Thyroid gland (tissue), 4 donors: ENCODE measurements at regions of chr15 and their contacts with region 1.

Region 1: DNA sequence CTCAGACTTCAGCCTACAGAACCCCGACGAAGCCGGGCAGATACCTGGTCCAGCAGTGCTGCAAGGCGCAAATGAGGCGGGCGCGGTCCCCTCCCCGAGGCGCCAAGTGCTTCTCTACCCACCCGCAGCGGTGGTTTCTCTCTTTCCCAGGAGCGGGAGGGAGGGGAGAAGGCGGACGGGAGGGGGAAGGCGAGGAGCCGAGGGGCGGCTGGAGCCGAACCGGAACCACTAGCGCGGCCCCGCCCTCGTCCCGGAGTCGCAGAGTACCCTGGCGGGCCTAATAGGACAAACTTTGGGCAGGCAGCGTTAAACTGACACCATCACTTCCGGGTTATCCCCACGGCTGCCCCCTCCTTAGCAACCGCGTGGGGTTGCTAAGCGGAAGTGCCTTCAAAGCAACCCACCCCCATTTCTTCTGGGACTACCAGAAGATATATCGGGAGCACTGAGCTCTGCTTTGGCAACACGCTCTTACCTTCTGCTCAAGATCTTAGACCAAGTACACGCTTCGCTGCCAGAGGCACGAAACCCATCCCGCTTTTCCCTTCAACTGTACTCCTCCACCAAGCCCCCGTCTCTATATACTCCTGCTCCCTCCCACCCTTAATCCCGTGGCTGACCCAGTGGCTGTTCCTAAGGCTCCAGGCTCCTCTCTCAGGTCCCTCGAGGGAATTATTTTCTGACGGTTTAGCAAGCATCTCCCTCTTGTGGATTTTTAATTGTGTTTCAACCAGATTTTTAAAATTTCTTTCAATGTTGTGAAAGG is at the start of gene CSNK1G1:
- DNase-seq: peak; percentile 96 to 98
- H3K4me3 ChIP-seq: peak within 1 kb of the TSS; percentile 66 to 97 (median 71)
- H3K27ac ChIP-seq: peak within 1 kb of the TSS; percentile 55 to 65 (median 60)
- H3K4me1 ChIP-seq: peaks cover 0 to 11% of the 10 kb centered on the region in 2 donors
- H3K27me3 ChIP-seq: no peaks in the 10 kb centered on the region
- CTCF ChIP-seq: peak; percentile 23 to 68 (median 41)
- POLR2A ChIP-seq: peak in 1 of 2 donors; percentile 41
- total RNA-seq, gene CSNK1G1: 19.1 to 50.0 (median 21.3) TPM

Region 2: GRCh38 chr15:64162870-64163658 is 193.1 kb before region 1 on chr15 and contains the start of gene PPIB:
- intact Hi-C with region 1: loop called (anchors 5 kb)
- DNase-seq: peak; percentile 99
- H3K4me3 ChIP-seq: peak within 1 kb of the TSS; percentile 63 to 77 (median 69)
- H3K27ac ChIP-seq: peak within 1 kb of the TSS; percentile 51 to 73 (median 68)
- H3K4me1 ChIP-seq: peaks cover 29 to 49% of the 10 kb centered on the region in 2 donors
- H3K27me3 ChIP-seq: no peaks in the 10 kb centered on the region
- CTCF ChIP-seq: peak in 4 of 6 experiments; percentile 35 to 74 (median 48)
- POLR2A ChIP-seq: peak; percentile 81 to 87
- total RNA-seq, gene PPIB: 1,046 to 3,819 (median 1,394) TPM

Region 3: DNA sequence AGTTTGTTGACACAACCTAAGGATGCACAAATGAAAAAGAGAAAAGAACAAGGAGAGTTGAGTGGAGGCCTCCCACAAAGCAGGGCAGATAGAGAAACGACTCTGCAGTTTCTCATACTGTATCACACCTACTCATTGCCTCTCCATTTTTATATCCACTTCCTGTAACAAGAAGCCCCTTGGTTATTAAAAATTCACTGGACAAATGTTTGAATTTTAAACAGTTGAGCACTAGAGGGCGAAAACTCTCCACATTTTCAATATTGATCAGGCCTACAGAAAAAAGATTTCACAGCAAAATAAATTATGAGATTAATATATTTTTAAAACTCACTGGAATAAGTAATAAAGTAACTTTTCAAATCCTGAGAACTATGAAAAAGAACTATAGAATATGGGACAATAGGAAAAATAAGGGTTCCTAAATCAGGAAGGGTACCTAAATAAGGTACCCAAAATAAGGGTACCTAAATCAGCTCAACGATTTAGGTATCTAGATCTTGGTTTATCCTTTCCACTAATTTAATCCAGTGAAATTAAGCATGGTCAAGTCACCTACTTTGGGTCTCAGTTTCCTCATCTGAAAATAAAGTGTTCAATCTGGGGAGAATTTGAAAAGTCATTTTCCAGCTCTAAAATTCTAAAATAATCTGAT is 146.3 kb before region 1 on chr15:
- intact Hi-C with region 1: loop called (anchors 5 kb)
- DNase-seq: no peak
- H3K4me3 ChIP-seq: no peak overlapping the region
- H3K27ac ChIP-seq: no peak overlapping the region
- H3K4me1 ChIP-seq: no peaks in the 10 kb centered on the region
- H3K27me3 ChIP-seq: no peaks in the 10 kb centered on the region
- CTCF ChIP-seq: peak in 5 of 6 experiments; percentile 12 to 60 (median 46)
- POLR2A ChIP-seq: no peak

Region 4: DNA sequence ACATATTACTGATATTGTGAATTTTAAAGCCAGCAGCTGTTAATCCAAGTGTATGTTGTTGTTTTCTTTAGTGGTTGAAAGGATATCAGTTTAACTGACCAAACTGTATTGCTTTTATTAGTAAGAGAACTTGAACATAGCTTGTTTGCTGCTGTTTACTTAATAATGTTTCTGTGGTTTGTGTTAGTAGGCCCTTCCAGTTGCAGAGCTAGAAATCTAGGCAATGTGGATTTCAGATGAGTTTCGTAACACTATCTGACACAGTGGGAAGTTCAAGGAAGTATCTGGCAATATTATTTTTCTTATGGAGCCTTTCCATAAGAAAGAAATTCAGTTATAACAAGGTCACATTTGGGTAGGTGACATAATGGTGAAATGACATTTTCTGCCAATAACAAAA is 122.7 kb after region 1 on chr15:
- intact Hi-C with region 1: no loop called
- DNase-seq: no peak
- H3K4me3 ChIP-seq: no peak overlapping the region
- H3K27ac ChIP-seq: no peak overlapping the region
- H3K4me1 ChIP-seq: peaks cover 5 to 6% of the 10 kb centered on the region in 2 donors
- H3K27me3 ChIP-seq: no peaks in the 10 kb centered on the region
- CTCF ChIP-seq: no peak
- POLR2A ChIP-seq: no peak

Region 5: DNA sequence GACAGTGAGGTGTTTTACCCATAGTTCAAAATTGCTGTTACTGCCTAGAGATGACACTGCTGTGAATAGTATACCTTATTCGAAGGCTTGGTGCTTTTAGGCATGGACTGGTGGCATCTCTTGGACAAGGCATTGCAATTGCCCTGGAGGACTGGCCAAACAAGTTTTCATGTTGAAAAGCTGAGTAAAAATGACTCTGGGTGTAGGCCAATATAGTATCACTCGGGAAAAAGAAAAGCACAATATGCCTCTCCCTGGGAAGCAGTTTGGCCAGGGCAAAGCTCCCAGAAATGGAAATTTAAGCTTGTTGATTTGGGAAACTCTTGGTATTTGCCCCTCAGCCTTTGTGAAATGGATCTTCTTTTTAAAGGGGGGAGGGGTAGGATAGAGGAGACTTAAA is 159.1 kb after region 1 on chr15:
- intact Hi-C with region 1: no loop called
- DNase-seq: peak; percentile 58
- H3K4me3 ChIP-seq: no peak overlapping the region
- H3K27ac ChIP-seq: peak overlapping the region; percentile 35 to 61 (median 41)
- H3K4me1 ChIP-seq: peaks cover 27 to 28% of the 10 kb centered on the region in 2 donors
- H3K27me3 ChIP-seq: no peaks in the 10 kb centered on the region
- CTCF ChIP-seq: peak in 1 of 6 experiments; percentile 8
- POLR2A ChIP-seq: no peak